ENCODE measurements at regions of chr3 and their contacts with region 1.

Region 1: DNA sequence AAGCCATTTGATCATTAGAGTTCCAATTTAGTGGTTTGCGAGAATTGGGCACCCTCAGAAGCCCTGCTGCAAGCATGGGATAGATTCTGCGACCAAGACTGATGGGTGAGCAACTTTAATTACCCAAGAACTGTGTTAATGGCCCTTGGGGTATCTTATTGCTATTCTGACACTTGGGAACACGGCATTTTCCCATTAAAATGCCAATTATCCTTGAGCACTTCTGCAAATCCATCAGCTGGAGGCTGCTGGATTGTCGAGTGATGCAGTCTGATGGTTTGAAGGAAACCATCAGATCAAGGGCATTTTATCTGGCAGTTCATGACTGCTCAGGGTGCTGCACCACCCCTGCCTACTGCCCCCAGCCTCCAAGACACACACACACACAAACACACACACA is 183.6 kb upstream of the PROK2 start:
- DNase-seq: no peak
- ATAC-seq: no peak
- H3K4me3 Mint-ChIP-seq: no peak overlapping the region
- H3K27ac Mint-ChIP-seq: no peak overlapping the region
- H3K4me1 Mint-ChIP-seq: no peaks in the 10 kb centered on the region
- H3K27me3 Mint-ChIP-seq: peaks cover 15% of the 10 kb centered on the region

Region 2: GRCh38 chr3:72031581-72031980 is 63.0 kb after region 1 on chr3:
- CTCF ChIA-PET with region 1: no interaction called
- POLR2A ChIA-PET with region 1: no interaction called
- intact Hi-C with region 1: loop called in 1 of 2 experiments (anchors 5 kb)
- DNase-seq: peak; percentile 21
- ATAC-seq: peak; percentile 54
- H3K4me3 Mint-ChIP-seq: no peak overlapping the region
- H3K27ac Mint-ChIP-seq: no peak overlapping the region
- H3K4me1 Mint-ChIP-seq: peaks cover 24% of the 10 kb centered on the region
- H3K27me3 Mint-ChIP-seq: peaks cover 6% of the 10 kb centered on the region

Region 3: GRCh38 chr3:72274493-72275330 is 306.2 kb after region 1 on chr3:
- CTCF ChIA-PET with region 1: no interaction called
- POLR2A ChIA-PET with region 1: no interaction called
- intact Hi-C with region 1: no loop called
- DNase-seq: no peak
- ATAC-seq: no peak
- H3K4me3 Mint-ChIP-seq: no peak overlapping the region
- H3K27ac Mint-ChIP-seq: peak overlapping the region; percentile 5
- H3K4me1 Mint-ChIP-seq: peaks cover 35% of the 10 kb centered on the region
- H3K27me3 Mint-ChIP-seq: peaks cover 3% of the 10 kb centered on the region

Region 4: GRCh38 chr3:73796382-73796781 is 1827.8 kb after region 1 on chr3:
- CTCF ChIA-PET with region 1: no interaction called
- POLR2A ChIA-PET with region 1: no interaction called
- intact Hi-C with region 1: no loop called
- DNase-seq: no peak
- ATAC-seq: no peak
- H3K4me3 Mint-ChIP-seq: no peak overlapping the region
- H3K27ac Mint-ChIP-seq: no peak overlapping the region
- H3K4me1 Mint-ChIP-seq: no peaks in the 10 kb centered on the region
- H3K27me3 Mint-ChIP-seq: no peaks in the 10 kb centered on the region

Measured in activated CD4-positive, alpha-beta T cell treated with anti-CD3 and anti-CD28 coated beads for 36 hours (primary cell).